ENCODE measurements at regions of chr9 and their contacts with region 1.

Region 1: DNA sequence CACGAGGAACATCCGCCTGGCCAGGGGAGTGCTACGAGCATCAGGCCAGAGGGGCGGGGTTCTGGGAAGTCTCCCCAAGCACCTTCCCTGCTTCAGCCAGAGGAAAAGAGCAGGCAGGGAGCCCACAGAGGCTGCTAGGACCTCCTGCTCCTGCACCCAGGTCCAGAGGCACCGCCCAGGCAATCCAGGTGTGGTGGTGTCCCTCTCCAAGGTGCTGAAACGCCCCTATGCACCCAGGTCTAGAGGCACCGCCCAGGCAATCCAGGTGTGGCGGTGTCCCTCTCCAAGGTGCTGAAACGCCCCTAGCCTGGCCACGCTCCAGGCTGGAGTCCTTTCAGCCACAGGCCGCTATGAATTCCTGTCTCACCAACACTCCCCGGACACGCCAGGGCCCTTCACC is 10.7 kb upstream of the UBAC1 start:
- DNase-seq: no peak
- H3K4me3 ChIP-seq: no peak overlapping the region
- CTCF ChIP-seq: no peak

Region 2: DNA sequence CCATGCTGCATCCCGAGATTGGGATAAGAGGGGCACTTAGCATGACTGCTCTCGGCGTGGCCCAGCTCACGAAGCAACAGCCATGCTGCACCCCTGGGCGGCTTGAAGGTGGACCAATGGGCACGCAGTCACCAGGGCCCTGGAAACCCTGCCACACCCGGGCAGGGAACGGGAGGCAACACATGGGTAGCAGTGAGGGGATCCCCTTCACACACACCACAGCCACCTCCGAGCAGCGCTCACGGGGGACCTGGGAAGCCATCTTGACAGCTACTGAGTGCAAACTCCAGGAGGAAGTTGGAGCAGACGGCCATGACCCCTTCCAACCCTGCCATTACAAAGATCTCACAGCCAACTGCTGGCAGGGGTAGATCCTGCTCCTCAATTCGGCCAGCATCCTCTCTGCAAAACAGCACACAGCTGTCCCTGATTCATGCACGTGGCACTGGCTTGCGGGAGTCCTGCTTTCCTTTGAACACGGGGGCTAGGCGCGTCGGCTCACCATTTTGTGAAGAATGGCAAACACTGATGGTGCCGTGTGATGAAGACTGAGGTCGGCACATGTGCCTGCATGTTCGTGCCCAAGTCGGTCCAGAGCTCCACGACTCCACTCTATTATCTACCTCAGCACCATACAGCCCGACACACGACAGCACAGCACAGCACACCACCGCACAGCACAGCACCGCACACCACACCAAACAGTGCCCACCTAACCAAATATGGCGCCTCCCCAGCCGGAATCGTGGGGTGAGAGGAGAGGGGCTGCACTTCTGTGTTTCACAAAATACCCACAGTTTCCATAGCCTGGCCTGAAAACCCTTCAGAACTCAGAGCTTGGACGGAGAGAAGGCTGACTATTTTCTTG is 15.7 kb before region 1 on chr9:
- CTCF ChIA-PET with region 1: interaction called, 14 read pairs
- POLR2A ChIA-PET with region 1: no interaction called
- DNase-seq: no peak
- H3K4me3 ChIP-seq: no peak overlapping the region
- CTCF ChIP-seq: no peak

Region 3: GRCh38 chr9:135983208-135984071 is 11.5 kb after region 1 on chr9:
- CTCF ChIA-PET with region 1: interaction called, 36 read pairs
- POLR2A ChIA-PET with region 1: no interaction called
- DNase-seq: no peak
- H3K4me3 ChIP-seq: no peak overlapping the region
- CTCF ChIP-seq: no peak

Region 4: GRCh38 chr9:136093995-136094881 is 122.3 kb after region 1 on chr9:
- CTCF ChIA-PET with region 1: interaction called, 35 read pairs
- POLR2A ChIA-PET with region 1: no interaction called
- DNase-seq: no peak
- H3K4me3 ChIP-seq: peak overlapping the region; percentile 75
- CTCF ChIP-seq: peak; percentile 4

Region 5: GRCh38 chr9:136127313-136127712 is 155.4 kb after region 1 on chr9:
- CTCF ChIA-PET with region 1: interaction called, 195 read pairs
- POLR2A ChIA-PET with region 1: interaction called, 4 read pairs
- DNase-seq: no peak
- H3K4me3 ChIP-seq: no peak overlapping the region
- CTCF ChIP-seq: no peak

Region 6: GRCh38 chr9:136342181-136343120 is 370.6 kb after region 1 on chr9:
- CTCF ChIA-PET with region 1: no interaction called
- POLR2A ChIA-PET with region 1: no interaction called
- DNase-seq: no peak
- H3K4me3 ChIP-seq: no peak overlapping the region
- CTCF ChIP-seq: no peak